Activated CD4-positive, alpha-beta T cell treated with anti-CD3 and anti-CD28 coated beads, Interleukin-2, amount 10 ng/mL, durations not matched to agents 7 days and 5 days (primary cell): ENCODE measurements at regions of chr11 and their contacts with region 1.

Region 1: GRCh38 chr11:95705485-95706124 is 84.0 kb downstream of the FAM76B start:
- DNase-seq: peak; percentile 91
- H3K4me3 Mint-ChIP-seq: no peak overlapping the region
- H3K27ac Mint-ChIP-seq: no peak overlapping the region
- H3K4me1 Mint-ChIP-seq: peaks cover 9% of the 10 kb centered on the region
- H3K27me3 Mint-ChIP-seq: no peaks in the 10 kb centered on the region

Region 2: GRCh38 chr11:95521133-95521542 is 184.5 kb before region 1 on chr11:
- CTCF ChIA-PET with region 1: no interaction called
- POLR2A ChIA-PET with region 1: no interaction called
- DNase-seq: no peak
- H3K4me3 Mint-ChIP-seq: no peak overlapping the region
- H3K27ac Mint-ChIP-seq: no peak overlapping the region
- H3K4me1 Mint-ChIP-seq: no peaks in the 10 kb centered on the region
- H3K27me3 Mint-ChIP-seq: peaks cover 1% of the 10 kb centered on the region

Region 3: DNA sequence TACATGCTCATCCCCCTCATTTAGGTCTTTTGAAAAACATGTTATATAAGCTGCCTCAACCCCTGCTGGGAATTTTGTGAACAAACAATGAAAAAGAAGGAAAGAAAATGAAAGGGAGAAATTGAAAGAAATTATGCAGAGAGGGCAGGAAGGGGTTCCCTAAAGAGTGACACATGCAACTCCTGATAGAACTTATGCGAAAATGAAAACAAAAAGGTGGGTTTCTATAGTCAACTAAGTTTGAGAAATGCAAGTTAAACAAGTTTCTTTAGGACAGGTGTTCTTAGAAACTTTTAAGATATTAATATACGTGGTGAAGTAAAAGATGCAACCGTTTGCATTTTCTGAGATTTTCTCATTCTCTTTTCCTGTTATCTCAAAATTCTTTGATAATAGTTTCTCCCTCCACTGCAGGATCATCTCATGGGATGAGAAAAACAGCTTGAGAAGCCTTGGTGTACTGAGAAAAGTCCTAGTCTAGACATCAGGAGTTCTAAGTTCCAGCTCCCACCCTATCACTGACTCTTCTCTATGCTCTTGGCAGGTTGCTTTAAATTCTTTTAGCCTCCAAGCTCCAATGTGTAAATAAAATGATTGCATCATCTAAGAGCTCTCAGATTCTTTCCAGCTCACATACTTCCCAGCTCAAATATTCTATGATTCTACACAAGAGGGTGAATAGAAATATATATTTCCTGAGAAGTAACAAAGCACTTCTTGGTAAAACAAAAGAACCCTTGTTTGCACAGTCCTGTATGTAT is 25.3 kb before region 1 on chr11:
- CTCF ChIA-PET with region 1: interaction called, 14 read pairs
- POLR2A ChIA-PET with region 1: no interaction called
- DNase-seq: no peak
- H3K4me3 Mint-ChIP-seq: no peak overlapping the region
- H3K27ac Mint-ChIP-seq: peak overlapping the region; percentile 69
- H3K4me1 Mint-ChIP-seq: peaks cover 54% of the 10 kb centered on the region
- H3K27me3 Mint-ChIP-seq: no peaks in the 10 kb centered on the region

Region 4: DNA sequence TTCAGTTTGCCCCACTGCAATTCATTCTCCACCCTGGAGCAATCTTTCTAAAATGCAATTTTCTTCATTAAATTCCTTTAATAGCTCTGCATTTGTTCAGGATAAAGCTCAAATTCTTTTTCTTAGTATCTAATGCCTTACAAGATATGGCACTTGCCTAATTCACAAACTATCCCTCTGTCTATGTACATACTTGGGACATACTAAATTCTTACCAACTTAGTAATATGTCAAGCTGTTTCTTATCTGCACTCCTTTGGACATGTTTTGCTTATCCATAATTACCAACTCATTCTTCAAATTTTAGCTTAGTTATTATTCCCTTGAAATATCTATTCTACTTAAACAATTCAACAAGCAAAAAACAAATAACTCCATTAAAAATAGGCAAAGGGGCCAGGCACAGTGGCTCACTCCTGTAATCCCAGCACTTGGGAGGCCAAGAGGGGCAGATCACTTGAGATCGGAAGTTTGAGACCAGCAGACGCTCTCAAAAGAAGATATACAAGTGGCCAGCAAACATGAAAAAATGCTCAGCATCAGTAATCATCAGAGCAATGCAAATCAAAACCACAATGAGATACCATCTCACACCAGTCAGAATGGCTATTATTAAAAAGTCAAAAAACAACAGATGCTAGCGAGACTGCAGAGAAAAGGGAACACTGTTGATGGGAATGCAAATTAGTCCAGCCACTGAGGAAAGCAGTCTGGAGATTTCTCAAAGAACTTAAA is 12.9 kb before region 1 on chr11:
- CTCF ChIA-PET with region 1: interaction called, 11 read pairs
- POLR2A ChIA-PET with region 1: no interaction called
- DNase-seq: no peak
- H3K4me3 Mint-ChIP-seq: no peak overlapping the region
- H3K27ac Mint-ChIP-seq: no peak overlapping the region
- H3K4me1 Mint-ChIP-seq: peaks cover 33% of the 10 kb centered on the region
- H3K27me3 Mint-ChIP-seq: no peaks in the 10 kb centered on the region

Region 5: GRCh38 chr11:95715777-95716241 is 10.2 kb after region 1 on chr11:
- CTCF ChIA-PET with region 1: interaction called, 10 read pairs
- POLR2A ChIA-PET with region 1: no interaction called
- DNase-seq: peak; percentile 17
- H3K4me3 Mint-ChIP-seq: no peak overlapping the region
- H3K27ac Mint-ChIP-seq: no peak overlapping the region
- H3K4me1 Mint-ChIP-seq: peaks cover 36% of the 10 kb centered on the region
- H3K27me3 Mint-ChIP-seq: no peaks in the 10 kb centered on the region

Region 6: DNA sequence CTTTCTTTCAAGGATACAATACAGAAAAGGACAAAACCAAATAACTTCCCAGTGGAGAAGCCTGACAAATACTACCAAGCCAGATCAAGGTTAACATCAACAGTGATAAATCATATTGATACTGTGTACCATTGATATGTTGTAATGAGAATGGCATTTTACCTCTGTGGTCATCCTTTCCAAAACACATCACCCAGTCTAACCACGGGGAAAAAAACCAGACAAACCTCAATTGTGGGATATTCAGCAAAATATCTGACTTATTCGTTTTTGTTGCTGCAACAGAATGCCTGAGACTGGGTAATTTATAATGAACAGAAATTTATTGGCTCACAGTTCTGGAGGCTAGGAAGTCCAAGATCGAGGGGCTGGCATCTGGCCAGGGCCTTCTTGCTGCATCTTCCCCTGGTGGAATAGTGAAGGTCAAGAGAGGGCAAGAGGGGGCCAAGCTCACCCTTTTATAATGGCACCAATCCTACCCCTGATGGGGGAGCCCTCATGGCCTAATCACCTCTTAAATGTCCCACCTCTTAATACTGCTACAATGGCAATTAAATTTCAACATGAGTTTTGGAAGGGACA is 17.8 kb after region 1 on chr11:
- CTCF ChIA-PET with region 1: interaction called, 10 read pairs
- POLR2A ChIA-PET with region 1: no interaction called
- DNase-seq: no peak
- H3K4me3 Mint-ChIP-seq: no peak overlapping the region
- H3K27ac Mint-ChIP-seq: no peak overlapping the region
- H3K4me1 Mint-ChIP-seq: peaks cover 12% of the 10 kb centered on the region
- H3K27me3 Mint-ChIP-seq: peaks cover 3% of the 10 kb centered on the region